Gastrocnemius medialis (tissue), 4 donors: ENCODE measurements at regions of chr15 and their contacts with region 1.

Region 1: DNA sequence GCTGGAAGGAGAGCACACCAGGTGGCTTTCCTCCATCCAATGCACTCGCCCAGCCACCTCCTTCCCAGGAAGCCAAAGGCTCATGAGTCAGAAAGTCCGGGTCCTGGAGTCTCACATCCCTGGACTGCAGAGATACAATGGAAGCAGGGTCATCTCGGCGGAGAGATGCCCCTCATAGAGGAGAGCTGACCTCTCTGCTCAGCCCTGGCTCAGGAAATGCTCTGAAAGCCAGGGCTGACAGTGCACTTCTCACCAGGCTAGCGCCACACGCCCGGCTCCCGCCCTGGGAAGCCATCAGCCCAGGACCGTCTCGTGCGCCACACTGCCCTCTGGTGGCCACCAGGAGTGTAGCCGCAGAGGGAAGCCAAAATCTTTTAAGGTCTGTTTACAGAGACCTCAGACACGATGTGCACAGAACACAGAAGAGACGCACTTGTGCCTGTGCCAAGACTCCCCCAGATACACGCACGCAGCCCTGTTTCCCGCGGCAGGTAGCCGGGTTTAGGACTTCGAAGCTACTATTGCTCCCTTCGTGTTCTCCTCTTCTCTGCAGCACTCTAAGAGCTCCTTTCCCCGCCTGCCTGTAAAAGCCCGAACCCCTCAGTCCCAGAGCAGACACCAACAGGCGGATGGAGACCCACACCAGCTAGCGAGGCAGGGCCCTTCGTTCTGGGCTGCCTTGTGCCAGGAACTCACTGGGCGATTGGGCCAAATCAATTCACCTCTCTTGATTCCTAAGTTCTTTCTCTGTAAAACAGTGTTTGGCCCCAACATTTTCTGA is 9.7 kb downstream of the NTRK3 start:
- DNase-seq: peak; percentile 41 to 59
- ATAC-seq: peak; percentile 60 to 80
- H3K4me3 ChIP-seq: no peak overlapping the region
- H3K27ac ChIP-seq: no peak overlapping the region
- H3K4me1 ChIP-seq: peaks cover 4 to 6% of the 10 kb centered on the region in 2 donors
- H3K27me3 ChIP-seq: peaks cover 0 to 4% (median 0%) of the 10 kb centered on the region in 3 donors
- CTCF ChIP-seq: peak; percentile 80 to 97 (median 90)
- POLR2A ChIP-seq: no peak

Region 2: GRCh38 chr15:86915811-86916331 is 1331.0 kb before region 1 on chr15:
- in situ Hi-C with region 1: loop called in 2 of 4 experiments (anchors 10 to 25 kb)
- intact Hi-C with region 1: loop called (anchors 10 kb)
- DNase-seq: peak in 1 of 2 donors; percentile 27
- ATAC-seq: peak; percentile 81 to 88
- H3K4me3 ChIP-seq: no peak overlapping the region
- H3K27ac ChIP-seq: peak overlapping the region in 2 of 4 donors; percentile 32 to 54
- H3K4me1 ChIP-seq: peaks cover 8 to 26% of the 10 kb centered on the region in 2 donors
- H3K27me3 ChIP-seq: no peaks in the 10 kb centered on the region
- CTCF ChIP-seq: peak in 4 of 5 experiments; percentile 9 to 57 (median 44)
- POLR2A ChIP-seq: no peak

Region 3: DNA sequence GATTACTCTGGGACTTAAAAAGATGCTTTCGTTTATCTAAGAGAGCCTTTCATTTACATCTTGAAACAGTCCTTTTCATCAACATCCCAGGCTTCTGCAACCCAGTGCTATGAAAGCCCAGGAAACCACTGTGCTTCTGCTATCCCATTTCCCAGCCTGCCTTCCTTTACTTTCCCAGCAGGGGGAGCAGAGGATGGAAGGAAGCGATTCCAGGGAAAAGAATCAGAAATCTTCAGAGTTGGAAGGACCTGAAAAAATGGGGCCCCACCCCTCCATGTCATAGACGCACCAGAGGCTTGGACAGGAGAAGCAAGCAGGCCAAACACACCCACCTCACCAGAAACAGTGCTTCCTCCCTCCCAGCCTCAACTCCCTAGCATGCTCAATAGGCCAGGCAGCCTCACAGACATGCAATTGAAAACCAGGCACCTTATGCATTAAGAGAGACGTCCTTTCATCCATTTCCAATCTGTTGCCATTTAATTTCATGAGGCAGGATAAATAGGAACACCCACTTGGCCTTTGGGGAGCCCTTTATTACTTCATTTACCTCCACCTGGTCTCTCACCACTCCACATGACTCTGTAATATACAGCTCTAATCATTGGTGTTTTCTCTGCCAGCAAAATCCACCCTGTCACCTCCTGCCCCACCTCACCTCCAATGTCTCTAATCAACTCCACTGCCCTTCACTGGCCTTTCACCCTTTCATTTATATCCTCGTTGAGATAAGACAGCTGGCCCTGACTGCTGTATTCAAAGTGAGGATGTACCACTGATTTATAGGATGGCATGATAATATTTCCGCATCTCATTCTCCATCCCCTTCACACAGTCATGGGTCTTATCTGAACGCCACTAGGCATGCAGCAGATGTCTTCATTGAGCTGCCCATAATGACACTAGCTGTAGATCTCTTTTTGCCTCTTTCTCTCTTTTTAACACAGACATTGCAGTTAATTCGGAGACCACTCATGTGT is 574.3 kb before region 1 on chr15:
- in situ Hi-C with region 1: loop called in 1 of 4 experiments (anchors 25 kb)
- intact Hi-C with region 1: loop called (anchors 10 kb)
- DNase-seq: no peak
- ATAC-seq: no peak
- H3K4me3 ChIP-seq: no peak overlapping the region
- H3K27ac ChIP-seq: no peak overlapping the region
- H3K4me1 ChIP-seq: no peaks in the 10 kb centered on the region
- H3K27me3 ChIP-seq: no peaks in the 10 kb centered on the region
- CTCF ChIP-seq: peak; percentile 18 to 50 (median 44)
- POLR2A ChIP-seq: no peak

Region 4: DNA sequence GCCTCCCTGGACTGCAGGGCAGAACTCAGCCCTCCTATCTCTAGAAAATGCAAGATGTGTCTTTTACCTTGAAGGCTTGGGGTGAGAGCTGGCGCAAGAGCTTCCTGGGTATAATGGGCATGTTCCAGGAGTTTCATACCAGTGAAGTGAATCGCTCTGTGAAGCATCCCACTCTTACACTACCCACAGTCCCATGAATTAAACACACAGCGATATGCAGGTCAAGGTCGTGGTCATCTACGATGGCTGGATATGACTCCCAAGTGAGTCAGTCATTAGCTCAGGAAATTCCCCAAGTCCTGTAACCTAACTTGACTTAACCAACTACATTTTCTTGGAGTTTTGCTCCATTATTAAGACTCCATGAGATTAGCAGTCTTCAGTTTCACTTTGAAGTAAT is 430.0 kb before region 1 on chr15:
- in situ Hi-C with region 1: loop called in 1 of 4 experiments (anchors 25 kb)
- intact Hi-C with region 1: no loop called
- DNase-seq: no peak
- ATAC-seq: no peak
- H3K4me3 ChIP-seq: no peak overlapping the region
- H3K27ac ChIP-seq: no peak overlapping the region
- H3K4me1 ChIP-seq: no peaks in the 10 kb centered on the region
- H3K27me3 ChIP-seq: no peaks in the 10 kb centered on the region
- CTCF ChIP-seq: no peak
- POLR2A ChIP-seq: no peak

Region 5: GRCh38 chr15:88324741-88325065 is 77.8 kb after region 1 on chr15:
- in situ Hi-C with region 1: no loop called
- intact Hi-C with region 1: loop called (anchors 5 kb)
- DNase-seq: no peak
- ATAC-seq: no peak
- H3K4me3 ChIP-seq: no peak overlapping the region
- H3K27ac ChIP-seq: no peak overlapping the region
- H3K4me1 ChIP-seq: no peaks in the 10 kb centered on the region
- H3K27me3 ChIP-seq: no peaks in the 10 kb centered on the region
- CTCF ChIP-seq: no peak
- POLR2A ChIP-seq: no peak